ENCODE measurements at regions of chr10 and their contacts with region 1.

Region 1: GRCh38 chr10:127041552-127041951 is 136.3 kb downstream of the DOCK1 start:
- DNase-seq: no peak
- ATAC-seq: no peak
- H3K4me3 Mint-ChIP-seq: no peak overlapping the region
- H3K27ac Mint-ChIP-seq: no peak overlapping the region
- H3K4me1 Mint-ChIP-seq: no peaks in the 10 kb centered on the region
- H3K27me3 Mint-ChIP-seq: no peaks in the 10 kb centered on the region
- CTCF ChIP-seq: no peak

Region 2: GRCh38 chr10:127102171-127102570 is 60.6 kb after region 1 on chr10:
- CTCF ChIA-PET with region 1: no interaction called
- POLR2A ChIA-PET with region 1: no interaction called
- intact Hi-C with region 1: loop called (anchors 10 kb)
- DNase-seq: no peak
- ATAC-seq: no peak
- H3K4me3 Mint-ChIP-seq: no peak overlapping the region
- H3K27ac Mint-ChIP-seq: no peak overlapping the region
- H3K4me1 Mint-ChIP-seq: no peaks in the 10 kb centered on the region
- H3K27me3 Mint-ChIP-seq: no peaks in the 10 kb centered on the region
- CTCF ChIP-seq: no peak

Region 3: GRCh38 chr10:127313996-127314700 is 272.6 kb after region 1 on chr10:
- CTCF ChIA-PET with region 1: no interaction called
- POLR2A ChIA-PET with region 1: no interaction called
- intact Hi-C with region 1: no loop called
- DNase-seq: no peak
- ATAC-seq: no peak
- H3K4me3 Mint-ChIP-seq: no peak overlapping the region
- H3K27ac Mint-ChIP-seq: no peak overlapping the region
- H3K4me1 Mint-ChIP-seq: no peaks in the 10 kb centered on the region
- H3K27me3 Mint-ChIP-seq: peaks cover 4% of the 10 kb centered on the region
- CTCF ChIP-seq: no peak